ENCODE measurements at regions of chr11 and their contacts with region 1.

Region 1: GRCh38 chr11:117985953-117986887 is at the start of gene IL10RA:
- DNase-seq: peak; percentile 80
- H3K4me3 Mint-ChIP-seq: peak within 1 kb of the TSS; percentile 85
- H3K27ac Mint-ChIP-seq: peak within 1 kb of the TSS; percentile 97
- H3K4me1 Mint-ChIP-seq: peaks cover 74% of the 10 kb centered on the region
- H3K27me3 Mint-ChIP-seq: no peaks in the 10 kb centered on the region
- total RNA-seq, gene IL10RA: 161 to 187 TPM

Region 2: GRCh38 chr11:117851106-117851505 is 135.1 kb before region 1 on chr11:
- CTCF ChIA-PET with region 1: no interaction called
- POLR2A ChIA-PET with region 1: no interaction called
- DNase-seq: no peak
- H3K4me3 Mint-ChIP-seq: no peak overlapping the region
- H3K27ac Mint-ChIP-seq: no peak overlapping the region
- H3K4me1 Mint-ChIP-seq: peaks cover 5% of the 10 kb centered on the region
- H3K27me3 Mint-ChIP-seq: peaks cover 27% of the 10 kb centered on the region

Region 3: DNA sequence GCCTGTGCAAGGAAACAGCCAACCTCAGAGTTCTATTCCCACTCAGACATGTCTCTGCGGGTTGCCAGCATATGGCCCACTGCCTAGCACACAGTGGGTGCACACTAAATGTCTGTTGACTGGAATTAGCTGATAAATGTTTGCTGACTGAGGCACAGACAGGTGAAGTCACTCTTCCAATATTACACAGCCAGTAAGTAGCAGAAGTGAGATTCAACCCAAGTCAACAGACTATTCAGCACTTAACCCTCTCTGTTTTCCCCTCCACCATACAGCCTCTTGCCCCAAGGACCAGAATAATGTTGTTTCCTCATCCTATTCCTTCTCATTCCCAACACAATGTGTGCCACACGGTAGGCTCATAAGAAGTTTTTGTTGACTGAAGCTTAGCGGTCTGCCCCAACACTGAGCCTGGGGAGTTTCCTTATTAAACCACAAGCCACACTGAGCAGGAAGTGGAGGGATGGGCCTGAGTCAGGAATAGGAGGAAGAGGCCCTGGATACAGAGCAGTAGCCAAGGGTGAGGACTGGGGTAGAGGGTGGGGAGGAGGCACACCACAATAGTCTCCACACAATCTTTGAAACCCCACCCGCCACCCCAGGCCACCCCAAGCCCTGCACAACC is 15.7 kb before region 1 on chr11:
- CTCF ChIA-PET with region 1: interaction called, 26 read pairs
- POLR2A ChIA-PET with region 1: interaction called, 3 read pairs
- DNase-seq: peak; percentile 46
- H3K4me3 Mint-ChIP-seq: peak overlapping the region; percentile 5
- H3K27ac Mint-ChIP-seq: peak overlapping the region; percentile 56
- H3K4me1 Mint-ChIP-seq: peaks cover 59% of the 10 kb centered on the region
- H3K27me3 Mint-ChIP-seq: no peaks in the 10 kb centered on the region

Region 4: GRCh38 chr11:118002541-118003423 is 16.6 kb after region 1 on chr11:
- CTCF ChIA-PET with region 1: interaction called, 42 read pairs
- POLR2A ChIA-PET with region 1: interaction called, 8 read pairs
- DNase-seq: peak; percentile 60
- H3K4me3 Mint-ChIP-seq: peak overlapping the region; percentile 58
- H3K27ac Mint-ChIP-seq: peak overlapping the region; percentile 90
- H3K4me1 Mint-ChIP-seq: peaks cover 100% of the 10 kb centered on the region
- H3K27me3 Mint-ChIP-seq: no peaks in the 10 kb centered on the region

Measured in activated CD4-positive, alpha-beta T cell treated with anti-CD3 and anti-CD28 coated beads, Interleukin-2, amount 10 ng/mL, durations not matched to agents 7 days and 5 days (primary cell).